Activated CD4-positive, alpha-beta memory T cell treated with anti-CD3 and anti-CD28 coated beads for 36 hours (primary cell): ENCODE measurements at regions of chr19 and their contacts with region 1.

Region 1: DNA sequence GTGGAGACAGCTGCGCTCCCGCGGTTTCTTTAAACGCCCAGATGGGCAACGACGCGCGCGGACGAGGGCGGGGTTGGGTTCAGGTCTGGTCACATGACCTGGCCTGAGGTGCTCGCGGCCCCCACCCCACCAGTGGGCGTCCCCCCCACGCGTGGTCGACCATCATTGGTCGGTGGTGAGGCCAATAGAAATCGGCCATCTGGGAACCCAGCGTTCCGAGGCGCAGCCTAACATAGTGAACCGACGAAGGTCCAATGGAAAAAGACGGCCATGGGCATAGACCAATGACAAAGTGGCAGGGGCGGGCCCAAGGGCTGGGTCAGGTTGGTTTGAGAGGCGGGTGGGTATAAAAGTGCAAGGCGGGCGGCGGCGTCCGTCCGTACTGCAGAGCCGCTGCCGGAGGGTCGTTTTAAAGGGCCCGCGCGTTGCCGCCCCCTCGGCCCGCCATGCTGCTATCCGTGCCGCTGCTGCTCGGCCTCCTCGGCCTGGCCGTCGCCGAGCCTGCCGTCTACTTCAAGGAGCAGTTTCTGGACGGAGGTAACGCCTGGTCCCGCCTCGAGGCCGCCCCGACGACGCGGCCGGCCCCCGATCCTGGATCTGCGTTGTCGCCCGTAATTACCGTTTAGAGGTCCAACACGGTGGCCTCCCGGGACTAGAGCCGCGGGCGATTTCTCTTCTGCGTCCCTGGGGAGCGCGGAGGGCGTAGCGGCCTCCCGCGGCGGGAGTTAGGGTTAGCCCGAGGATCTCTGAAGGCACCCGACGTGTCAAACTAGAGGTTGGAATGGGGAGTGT is at the start of gene CALR:
- DNase-seq: peak; percentile 99
- H3K4me3 Mint-ChIP-seq: peak within 1 kb of the TSS; percentile 98
- H3K27ac Mint-ChIP-seq: peak within 1 kb of the TSS; percentile 95
- H3K4me1 Mint-ChIP-seq: peaks cover 53% of the 10 kb centered on the region
- H3K27me3 Mint-ChIP-seq: no peaks in the 10 kb centered on the region
- total RNA-seq, gene CALR: 625 to 642 TPM

Region 2: GRCh38 chr19:12610540-12611360 is 327.7 kb before region 1 on chr19 and contains the starts of genes ZNF490 and ZNF791:
- CTCF ChIA-PET with region 1: no interaction called
- POLR2A ChIA-PET with region 1: no interaction called
- intact Hi-C with region 1: loop called (anchors 5 kb)
- DNase-seq: peak; percentile 98
- H3K4me3 Mint-ChIP-seq: peak within 1 kb of the TSS; percentile 100
- H3K27ac Mint-ChIP-seq: peak within 1 kb of the TSS; percentile 99
- H3K4me1 Mint-ChIP-seq: peaks cover 26% of the 10 kb centered on the region
- H3K27me3 Mint-ChIP-seq: no peaks in the 10 kb centered on the region
- total RNA-seq, gene ZNF490: 6.9 to 7.0 TPM
- total RNA-seq, gene ZNF791: 18.2 to 19.1 TPM

Region 3: GRCh38 chr19:12736995-12737834 is 201.2 kb before region 1 on chr19 and contains the start of gene GET3:
- CTCF ChIA-PET with region 1: no interaction called
- POLR2A ChIA-PET with region 1: no interaction called
- intact Hi-C with region 1: loop called (anchors 5 kb)
- DNase-seq: peak; percentile 88
- H3K4me3 Mint-ChIP-seq: peak within 1 kb of the TSS; percentile 100
- H3K27ac Mint-ChIP-seq: peak within 1 kb of the TSS; percentile 93
- H3K4me1 Mint-ChIP-seq: peaks cover 33% of the 10 kb centered on the region
- H3K27me3 Mint-ChIP-seq: no peaks in the 10 kb centered on the region
- total RNA-seq, gene GET3: 54.2 TPM

Region 4: DNA sequence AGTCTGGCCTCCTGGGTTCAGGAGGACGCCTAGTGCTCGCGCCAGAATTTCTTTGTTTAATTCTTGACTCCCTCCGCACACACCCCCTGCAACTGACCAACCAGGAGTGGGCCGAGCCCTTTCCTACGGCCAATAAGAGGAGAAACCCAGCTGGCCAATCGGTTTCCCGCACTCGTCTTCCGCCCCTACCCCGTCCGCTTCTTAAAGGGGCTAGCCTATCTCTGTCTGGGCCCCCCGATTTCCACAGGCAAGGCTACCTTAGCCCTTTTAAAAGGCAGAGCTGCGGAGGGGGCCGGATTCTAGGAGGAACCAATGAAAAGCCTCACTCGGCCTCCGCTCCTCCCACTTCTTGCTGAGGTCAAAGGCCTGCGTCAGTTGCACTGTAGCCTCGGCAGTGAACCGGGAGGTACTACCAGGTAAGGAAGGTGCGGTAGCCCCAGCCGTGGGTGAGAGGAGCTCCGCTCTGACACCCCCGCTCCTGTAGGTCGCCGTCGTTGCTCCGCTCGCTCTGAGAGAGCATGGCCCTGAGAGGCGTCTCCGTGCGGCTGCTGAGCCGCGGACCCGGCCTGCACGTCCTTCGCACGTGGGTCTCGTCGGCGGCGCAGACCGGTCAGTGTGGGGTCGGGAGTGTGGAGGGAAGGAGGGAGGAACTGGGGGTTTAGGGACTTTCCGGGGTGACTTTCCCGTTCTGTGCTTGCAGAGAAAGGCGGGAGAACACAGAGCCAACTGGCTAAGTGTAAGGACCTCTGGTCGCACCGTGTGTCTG is 47.5 kb before region 1 on chr19 and contains the start of gene GCDH:
- CTCF ChIA-PET with region 1: interaction called, 6 read pairs
- POLR2A ChIA-PET with region 1: interaction called, 5 read pairs
- intact Hi-C with region 1: loop called (anchors 1 kb)
- DNase-seq: peak; percentile 98
- H3K4me3 Mint-ChIP-seq: peak within 1 kb of the TSS; percentile 99
- H3K27ac Mint-ChIP-seq: peak within 1 kb of the TSS; percentile 81
- H3K4me1 Mint-ChIP-seq: peaks cover 29% of the 10 kb centered on the region
- H3K27me3 Mint-ChIP-seq: no peaks in the 10 kb centered on the region
- total RNA-seq, gene GCDH: 33.6 to 34.4 TPM

Region 5: GRCh38 chr19:13150187-13150930 is 211.9 kb after region 1 on chr19 and contains the starts of genes IER2 and STX10:
- CTCF ChIA-PET with region 1: no interaction called
- POLR2A ChIA-PET with region 1: no interaction called
- intact Hi-C with region 1: loop called (anchors 5 kb)
- DNase-seq: peak; percentile 96
- H3K4me3 Mint-ChIP-seq: peak within 1 kb of the TSS; percentile 99
- H3K27ac Mint-ChIP-seq: peak within 1 kb of the TSS; percentile 97
- H3K4me1 Mint-ChIP-seq: peaks cover 23% of the 10 kb centered on the region
- H3K27me3 Mint-ChIP-seq: peaks cover 3% of the 10 kb centered on the region
- total RNA-seq, gene IER2: 129 to 137 TPM
- total RNA-seq, gene STX10: 65.5 to 66.3 TPM